Prostate gland (tissue), 2 donors: ENCODE measurements at regions of chr19 and their contacts with region 1.

Region 1: DNA sequence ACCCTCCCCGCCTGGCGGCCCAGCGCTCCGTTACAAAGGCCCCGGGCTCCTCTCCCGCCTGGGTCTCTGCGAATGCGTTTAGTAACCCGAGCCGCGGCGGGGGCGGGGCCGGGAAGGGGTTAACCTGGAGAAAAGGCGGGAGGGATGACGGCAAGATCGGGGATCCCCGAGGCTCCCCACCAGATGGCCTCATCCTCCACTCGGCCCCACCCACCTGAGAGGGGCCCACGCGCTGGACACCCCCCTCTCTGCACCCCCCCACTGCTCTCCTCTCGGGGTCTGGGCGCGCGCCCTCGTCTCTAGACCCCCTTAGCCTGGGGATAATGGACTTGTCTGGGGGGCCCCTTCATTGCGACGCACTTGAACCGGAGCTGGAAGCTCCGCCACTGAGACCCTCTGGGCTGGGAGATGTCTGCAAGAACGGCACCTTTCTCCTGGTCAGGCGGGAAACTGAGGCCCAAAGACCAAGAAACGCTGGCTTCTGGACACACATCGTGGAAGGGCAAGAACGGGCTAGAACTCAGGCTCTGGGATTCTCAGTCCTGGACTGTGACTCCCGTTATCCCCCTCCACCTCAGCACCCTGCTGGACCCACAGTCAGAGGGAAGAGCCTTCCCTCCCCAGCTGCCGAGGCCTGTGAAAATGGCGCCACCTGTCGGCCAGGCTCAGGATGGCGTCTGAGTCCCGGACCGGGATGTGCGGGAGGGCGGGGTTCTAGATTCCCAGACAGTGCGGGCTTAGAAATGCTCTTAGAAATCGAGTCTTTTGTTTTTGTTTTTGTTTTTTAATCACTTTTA is 2.9 kb upstream of the LTBP4 start:
- DNase-seq: peak; percentile 81
- H3K4me3 ChIP-seq: no peak overlapping the region
- H3K27ac ChIP-seq: peak overlapping the region in 1 of 2 donors; percentile 16
- H3K4me1 ChIP-seq: peaks cover 21% of the 10 kb centered on the region
- H3K27me3 ChIP-seq: no peaks in the 10 kb centered on the region
- CTCF ChIP-seq: peak; percentile 95 to 96 (median 96)
- POLR2A ChIP-seq: no peak

Region 2: GRCh38 chr19:40305403-40305802 is 292.9 kb before region 1 on chr19:
- intact Hi-C with region 1: loop called (anchors 5 kb)
- DNase-seq: peak; percentile 76
- H3K4me3 ChIP-seq: no peak overlapping the region
- H3K27ac ChIP-seq: no peak overlapping the region
- H3K4me1 ChIP-seq: no peaks in the 10 kb centered on the region
- H3K27me3 ChIP-seq: no peaks in the 10 kb centered on the region
- CTCF ChIP-seq: peak; percentile 45 to 78 (median 74)
- POLR2A ChIP-seq: no peak

Region 3: GRCh38 chr19:40444192-40445028 is 153.9 kb before region 1 on chr19 and contains the start of gene SERTAD3:
- intact Hi-C with region 1: loop called (anchors 10 kb)
- DNase-seq: peak; percentile 97
- H3K4me3 ChIP-seq: peak within 1 kb of the TSS; percentile 85 to 97
- H3K27ac ChIP-seq: peak within 1 kb of the TSS; percentile 99
- H3K4me1 ChIP-seq: peaks cover 19% of the 10 kb centered on the region
- H3K27me3 ChIP-seq: no peaks in the 10 kb centered on the region
- CTCF ChIP-seq: peak in 2 of 4 experiments; percentile 27 to 29
- POLR2A ChIP-seq: peak; percentile 99
- total RNA-seq, gene SERTAD3: 22.7 to 37.3 TPM

Region 4: GRCh38 chr19:40529093-40529954 is 69.0 kb before region 1 on chr19:
- intact Hi-C with region 1: loop called (anchors 5 kb)
- DNase-seq: peak; percentile 82
- H3K4me3 ChIP-seq: peak overlapping the region; percentile 33 to 35
- H3K27ac ChIP-seq: peak overlapping the region in 1 of 2 donors; percentile 65
- H3K4me1 ChIP-seq: no peaks in the 10 kb centered on the region
- H3K27me3 ChIP-seq: no peaks in the 10 kb centered on the region
- CTCF ChIP-seq: peak; percentile 78 to 98 (median 96)
- POLR2A ChIP-seq: peak; percentile 17

Region 5: DNA sequence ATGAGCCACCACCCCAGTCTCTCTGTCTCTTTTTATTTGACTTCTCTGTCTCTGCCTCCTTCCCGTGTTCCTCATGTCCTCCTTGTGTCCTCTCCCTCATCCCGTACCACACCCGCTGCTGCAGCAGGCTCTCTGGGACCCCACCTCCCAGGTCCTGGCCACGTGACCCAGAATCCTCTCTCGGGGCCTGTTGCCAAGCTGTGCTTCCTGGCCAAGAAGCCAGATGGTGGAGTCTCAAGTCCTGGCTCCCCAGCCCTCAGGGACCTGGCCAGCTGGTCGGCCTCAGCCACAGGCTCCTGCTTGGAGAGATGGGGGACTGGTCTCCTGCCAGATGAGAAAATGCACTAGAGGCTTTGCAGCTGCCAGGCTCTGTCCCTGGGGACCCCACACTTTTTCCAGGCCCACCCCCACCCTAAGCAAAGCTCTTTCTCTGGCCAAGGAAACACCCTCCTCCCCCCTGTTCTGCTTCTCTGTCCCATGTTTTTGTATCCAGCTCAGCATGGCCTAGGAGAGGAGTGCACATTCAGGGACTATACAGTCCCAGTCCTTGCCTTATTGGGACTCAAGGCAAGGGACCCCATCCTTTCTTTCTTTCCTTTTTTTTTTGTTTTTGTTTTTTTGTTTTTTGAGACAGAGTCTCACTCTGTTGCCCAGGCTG is 56.0 kb before region 1 on chr19:
- intact Hi-C with region 1: loop called (anchors 5 kb)
- DNase-seq: no peak
- H3K4me3 ChIP-seq: no peak overlapping the region
- H3K27ac ChIP-seq: no peak overlapping the region
- H3K4me1 ChIP-seq: no peaks in the 10 kb centered on the region
- H3K27me3 ChIP-seq: no peaks in the 10 kb centered on the region
- CTCF ChIP-seq: no peak
- POLR2A ChIP-seq: no peak

Region 6: GRCh38 chr19:40716655-40717324 is 118.5 kb after region 1 on chr19 and contains the starts of genes COQ8B and ITPKC:
- intact Hi-C with region 1: no loop called
- DNase-seq: peak; percentile 99
- H3K4me3 ChIP-seq: peak within 1 kb of the TSS; percentile 79 to 85
- H3K27ac ChIP-seq: peak within 1 kb of the TSS; percentile 99 to 100
- H3K4me1 ChIP-seq: no peaks in the 10 kb centered on the region
- H3K27me3 ChIP-seq: no peaks in the 10 kb centered on the region
- CTCF ChIP-seq: peak in 2 of 4 experiments; percentile 49 to 54
- POLR2A ChIP-seq: peak; percentile 92
- total RNA-seq, gene COQ8B: 61.2 to 64.4 TPM
- total RNA-seq, gene ITPKC: 40.8 to 44.5 TPM